Ovary (tissue), 10 donors: ENCODE measurements at regions of chr6 and their contacts with region 1.

Region 1: GRCh38 chr6:117130125-117130524 is 135.2 kb upstream of the VGLL2 start:
- DNase-seq: no peak
- H3K4me3 ChIP-seq: no peak overlapping the region
- H3K27ac ChIP-seq: no peak overlapping the region
- H3K4me1 ChIP-seq: no peaks in the 10 kb centered on the region
- H3K27me3 ChIP-seq: no peaks in the 10 kb centered on the region
- CTCF ChIP-seq: no peak
- EP300 ChIP-seq: no peak
- POLR2A ChIP-seq: no peak

Region 2: DNA sequence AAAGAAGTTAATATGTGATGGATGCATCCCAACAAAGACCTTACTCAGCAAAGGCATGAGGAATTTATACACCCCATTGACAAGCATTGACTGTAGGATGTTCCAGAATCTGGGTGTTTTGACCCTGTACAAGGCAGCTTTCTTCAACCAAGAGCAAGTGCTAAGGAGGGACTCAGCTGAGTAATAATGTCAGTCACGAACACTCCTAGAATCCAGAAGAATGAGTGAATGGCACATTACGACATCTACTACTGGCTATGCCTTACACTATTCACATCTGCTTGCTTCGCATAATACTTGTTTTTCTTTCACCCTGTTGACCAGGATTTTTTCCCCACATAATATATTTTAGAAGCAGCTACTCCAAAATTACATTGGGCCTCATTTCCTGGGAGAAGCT is 92.7 kb after region 1 on chr6:
- intact Hi-C with region 1: loop called in 1 of 4 experiments (anchors 5 kb)
- DNase-seq: no peak
- H3K4me3 ChIP-seq: no peak overlapping the region
- H3K27ac ChIP-seq: no peak overlapping the region
- H3K4me1 ChIP-seq: no peaks in the 10 kb centered on the region
- H3K27me3 ChIP-seq: no peaks in the 10 kb centered on the region
- CTCF ChIP-seq: no peak
- EP300 ChIP-seq: no peak
- POLR2A ChIP-seq: no peak